PC-9 (cell line): ENCODE measurements at regions of chr12 and their contacts with region 1.

Region 1: DNA sequence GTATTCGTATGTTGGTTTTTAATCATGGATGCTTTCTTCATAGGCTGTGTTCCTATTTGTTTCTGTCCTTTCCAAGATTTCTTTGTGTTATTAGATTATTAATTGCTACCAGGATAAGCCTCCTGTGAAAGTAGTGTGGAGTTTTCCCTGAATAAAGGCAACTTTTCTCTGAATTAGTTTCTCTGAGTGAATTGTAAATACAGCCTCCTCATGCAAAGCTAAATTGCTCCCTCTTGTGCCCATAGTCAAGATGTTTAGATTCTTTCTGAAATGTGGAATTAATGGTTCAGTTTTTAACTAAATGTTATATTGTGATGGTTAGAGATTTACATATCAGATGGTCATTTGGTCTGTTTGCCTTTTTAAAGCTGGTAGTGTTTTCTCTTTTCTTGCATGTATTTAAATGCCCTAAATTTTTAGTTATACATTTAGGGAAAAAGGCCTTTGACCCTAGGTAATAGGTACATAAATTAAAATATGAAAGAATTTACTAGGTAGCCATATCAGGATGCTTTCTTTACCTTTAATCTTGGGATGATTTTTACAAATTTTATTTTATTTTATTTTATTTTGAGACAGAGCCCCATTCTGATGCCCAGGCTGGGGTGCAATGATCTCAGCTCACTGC is 8.9 kb downstream of the APAF1 start:
- DNase-seq: peak in 1 of 2 experiments; percentile 49
- H3K4me3 ChIP-seq: no peak overlapping the region
- H3K27ac ChIP-seq: no peak overlapping the region
- H3K4me1 ChIP-seq: peaks cover 13% of the 10 kb centered on the region
- H3K27me3 ChIP-seq: no peaks in the 10 kb centered on the region
- CTCF ChIP-seq: peak; percentile 81

Region 2: DNA sequence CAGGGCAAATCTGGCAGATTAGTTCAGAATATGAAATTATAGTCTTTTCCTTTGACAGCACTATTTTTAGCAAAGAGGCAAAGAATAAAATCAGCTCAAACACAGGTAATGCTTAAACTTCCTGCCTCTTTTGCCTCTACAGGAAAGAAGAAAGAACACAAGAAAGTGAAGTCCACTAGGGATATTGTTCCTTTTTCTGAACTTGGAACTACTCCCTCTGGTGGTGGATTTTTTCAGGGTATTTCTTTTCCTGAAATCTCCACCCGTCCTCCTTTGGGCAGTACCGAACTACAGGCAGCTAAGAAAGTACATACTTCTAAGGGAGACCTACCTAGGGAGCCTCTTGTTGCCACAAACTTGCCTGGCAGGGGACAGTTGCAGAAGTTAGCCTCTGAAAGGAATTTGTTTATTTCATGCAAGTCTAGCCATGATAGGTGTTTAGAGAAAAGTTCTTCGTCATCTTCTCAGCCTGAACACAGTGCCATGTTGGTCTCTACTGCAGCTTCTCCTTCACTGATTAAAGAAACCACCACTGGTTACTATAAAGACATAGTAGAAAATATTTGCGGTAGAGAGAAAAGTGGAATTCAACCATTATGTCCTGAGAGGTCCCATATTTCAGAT is 121.2 kb before region 1 on chr12:
- CTCF ChIA-PET with region 1: no interaction called
- POLR2A ChIA-PET with region 1: no interaction called
- intact Hi-C with region 1: loop called (anchors 1 kb)
- DNase-seq: peak in 1 of 2 experiments; percentile 39
- H3K4me3 ChIP-seq: no peak overlapping the region
- H3K27ac ChIP-seq: peak overlapping the region; percentile 35; the same call in 1 of the 2 replicates
- H3K4me1 ChIP-seq: no peaks in the 10 kb centered on the region
- H3K27me3 ChIP-seq: no peaks in the 10 kb centered on the region
- CTCF ChIP-seq: peak; percentile 79

Region 3: GRCh38 chr12:98612696-98613334 is 41.2 kb before region 1 on chr12:
- CTCF ChIA-PET with region 1: interaction called, 3 read pairs
- POLR2A ChIA-PET with region 1: no interaction called
- intact Hi-C with region 1: loop called (anchors 2 kb)
- DNase-seq: no peak
- H3K4me3 ChIP-seq: no peak overlapping the region
- H3K27ac ChIP-seq: no peak overlapping the region
- H3K4me1 ChIP-seq: no peaks in the 10 kb centered on the region
- H3K27me3 ChIP-seq: no peaks in the 10 kb centered on the region
- CTCF ChIP-seq: no peak

Region 4: GRCh38 chr12:98671459-98671858 is 17.5 kb after region 1 on chr12:
- CTCF ChIA-PET with region 1: no interaction called
- POLR2A ChIA-PET with region 1: no interaction called
- intact Hi-C with region 1: no loop called
- DNase-seq: no peak
- H3K4me3 ChIP-seq: no peak overlapping the region
- H3K27ac ChIP-seq: no peak overlapping the region
- H3K4me1 ChIP-seq: no peaks in the 10 kb centered on the region
- H3K27me3 ChIP-seq: no peaks in the 10 kb centered on the region
- CTCF ChIP-seq: no peak